Breast epithelium (tissue), 4 donors: ENCODE measurements at regions of chr20 and their contacts with region 1.

Region 1: GRCh38 chr20:6164421-6165341 is 41.9 kb upstream of the FERMT1 start:
- DNase-seq: no peak
- H3K4me3 ChIP-seq: no peak overlapping the region
- H3K27ac ChIP-seq: no peak overlapping the region
- H3K4me1 ChIP-seq: no peaks in the 10 kb centered on the region
- H3K27me3 ChIP-seq: no peaks in the 10 kb centered on the region
- CTCF ChIP-seq: no peak
- POLR2A ChIP-seq: no peak

Region 2: GRCh38 chr20:5056801-5057599 is 1107.7 kb before region 1 on chr20:
- intact Hi-C with region 1: no loop called
- DNase-seq: no peak
- H3K4me3 ChIP-seq: no peak overlapping the region
- H3K27ac ChIP-seq: no peak overlapping the region
- H3K4me1 ChIP-seq: no peaks in the 10 kb centered on the region
- H3K27me3 ChIP-seq: no peaks in the 10 kb centered on the region
- CTCF ChIP-seq: no peak
- POLR2A ChIP-seq: no peak

Region 3: GRCh38 chr20:7579888-7580287 is 1415.2 kb after region 1 on chr20:
- intact Hi-C with region 1: loop called (anchors 5 kb)
- DNase-seq: no peak
- H3K4me3 ChIP-seq: no peak overlapping the region
- H3K27ac ChIP-seq: no peak overlapping the region
- H3K4me1 ChIP-seq: no peaks in the 10 kb centered on the region
- H3K27me3 ChIP-seq: no peaks in the 10 kb centered on the region
- CTCF ChIP-seq: no peak
- POLR2A ChIP-seq: no peak